ENCODE measurements at regions of chr1 and their contacts with region 1.

Region 1: DNA sequence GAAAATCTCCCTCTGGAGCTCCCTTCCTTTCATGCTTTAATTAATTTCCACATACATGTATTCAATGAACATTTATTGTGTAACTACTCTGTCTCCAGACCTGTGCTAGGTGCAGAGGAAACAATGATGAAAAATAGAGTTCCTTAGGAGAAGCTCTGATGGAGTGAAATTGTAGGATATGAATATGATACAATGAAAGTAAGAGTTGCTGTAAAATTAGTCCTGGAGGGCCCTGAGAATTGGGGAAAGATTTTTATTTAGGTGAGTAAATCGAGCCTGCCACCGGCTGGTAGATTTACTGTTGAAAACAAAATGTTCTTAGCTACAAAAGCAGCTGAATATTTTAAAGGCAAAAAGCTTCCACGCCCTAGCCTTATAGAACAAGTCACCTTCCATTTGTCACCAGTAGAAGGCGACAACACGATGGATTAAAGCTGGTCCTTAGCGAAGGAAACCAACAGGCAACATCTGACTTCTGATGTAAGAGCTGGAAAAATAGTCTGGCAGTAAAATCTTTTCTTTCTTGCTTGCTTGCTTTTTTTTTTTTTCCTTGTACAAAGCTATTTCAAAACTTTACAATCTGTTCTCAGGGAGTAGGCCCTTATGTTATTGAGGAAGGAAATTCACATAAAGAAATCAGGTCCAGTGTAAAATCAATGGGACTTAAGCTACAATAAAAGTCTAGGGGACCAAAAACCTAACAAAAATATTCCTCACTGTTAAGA is 82.0 kb upstream of the ROR1 start:
- DNase-seq: peak; percentile 66
- H3K4me3 ChIP-seq: no peak overlapping the region
- H3K27ac ChIP-seq: peak overlapping the region in 1 of 2 donors; percentile 21
- H3K4me1 ChIP-seq: no peaks in the 10 kb centered on the region
- H3K27me3 ChIP-seq: no peaks in the 10 kb centered on the region
- CTCF ChIP-seq: peak; percentile 43 to 82 (median 72)
- POLR2A ChIP-seq: no peak

Region 2: GRCh38 chr1:63902844-63903589 is 211.2 kb after region 1 on chr1:
- intact Hi-C with region 1: no loop called
- DNase-seq: no peak
- H3K4me3 ChIP-seq: no peak overlapping the region
- H3K27ac ChIP-seq: no peak overlapping the region
- H3K4me1 ChIP-seq: no peaks in the 10 kb centered on the region
- H3K27me3 ChIP-seq: no peaks in the 10 kb centered on the region
- CTCF ChIP-seq: no peak
- POLR2A ChIP-seq: no peak

Region 3: GRCh38 chr1:64038965-64039926 is 347.4 kb after region 1 on chr1:
- intact Hi-C with region 1: loop called (anchors 10 kb)
- DNase-seq: peak; percentile 67
- H3K4me3 ChIP-seq: no peak overlapping the region
- H3K27ac ChIP-seq: no peak overlapping the region
- H3K4me1 ChIP-seq: no peaks in the 10 kb centered on the region
- H3K27me3 ChIP-seq: no peaks in the 10 kb centered on the region
- CTCF ChIP-seq: no peak
- POLR2A ChIP-seq: no peak

Measured in prostate gland (tissue), 2 donors.